Psoas muscle (tissue), 8 donors: ENCODE measurements at regions of chr13 and their contacts with region 1.

Region 1: DNA sequence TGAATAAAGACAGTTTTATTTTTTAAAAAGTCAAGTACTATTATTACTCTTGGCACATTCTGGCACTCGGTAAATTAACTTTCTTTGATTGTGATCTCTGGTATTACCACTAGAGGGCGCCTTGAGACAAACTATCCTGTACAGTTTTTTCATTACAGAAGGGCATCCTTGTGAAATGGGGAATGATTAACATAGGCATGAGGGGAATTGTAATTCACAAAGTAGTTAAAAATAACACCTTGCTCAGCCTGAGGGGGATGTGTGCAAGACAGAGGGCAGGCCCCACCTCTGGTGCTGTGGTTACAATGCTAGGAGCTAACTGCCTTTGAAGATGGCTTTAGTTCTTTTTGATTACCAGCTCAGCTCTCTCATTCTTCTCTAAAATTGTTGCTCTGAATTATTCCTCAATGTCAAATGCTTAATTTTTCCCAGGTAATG is 24.2 kb upstream of the C1QTNF9B start:
- DNase-seq: no peak
- ATAC-seq: peak; percentile 17 to 64 (median 54)
- H3K4me3 ChIP-seq: no peak overlapping the region
- H3K27ac ChIP-seq: no peak overlapping the region
- H3K4me1 ChIP-seq: no peaks in the 10 kb centered on the region
- H3K27me3 ChIP-seq: peaks cover 0 to 13% (median 0%) of the 10 kb centered on the region in 3 donors
- CTCF ChIP-seq: peak; percentile 63

Region 2: DNA sequence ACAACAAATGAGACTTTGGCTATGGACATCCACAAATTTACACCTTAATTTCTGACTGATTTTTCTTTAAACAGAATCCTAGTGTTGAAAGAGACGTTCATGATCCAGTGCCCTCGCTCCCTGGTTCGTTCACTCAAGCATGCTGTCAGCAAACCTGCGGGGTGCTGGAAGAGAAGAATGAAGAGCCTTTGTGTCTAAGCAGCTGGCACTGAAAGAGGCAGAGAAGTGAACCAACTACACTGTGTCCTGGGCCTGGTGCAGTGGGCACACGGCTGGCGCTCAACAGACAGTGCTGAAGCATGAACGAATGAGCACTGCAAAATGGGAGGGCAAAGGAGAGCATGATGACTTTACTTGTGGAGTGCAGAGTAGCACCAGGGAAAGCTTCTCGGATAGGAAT is 79.1 kb before region 1 on chr13:
- intact Hi-C with region 1: no loop called
- DNase-seq: no peak
- ATAC-seq: no peak
- H3K4me3 ChIP-seq: no peak overlapping the region
- H3K27ac ChIP-seq: no peak overlapping the region
- H3K4me1 ChIP-seq: peaks cover 8% of the 10 kb centered on the region
- H3K27me3 ChIP-seq: no peaks in the 10 kb centered on the region
- CTCF ChIP-seq: no peak

Region 3: GRCh38 chr13:24225937-24226336 is 304.5 kb after region 1 on chr13:
- intact Hi-C with region 1: loop called in 1 of 2 experiments (anchors 2 kb)
- DNase-seq: no peak
- ATAC-seq: no peak
- H3K4me3 ChIP-seq: no peak overlapping the region
- H3K27ac ChIP-seq: no peak overlapping the region
- H3K4me1 ChIP-seq: no peaks in the 10 kb centered on the region
- H3K27me3 ChIP-seq: no peaks in the 10 kb centered on the region
- CTCF ChIP-seq: no peak